Natural killer cell (primary cell): ENCODE measurements at regions of chr19 and their contacts with region 1.

Region 1: GRCh38 chr19:29665215-29665825 is at the start of gene PLEKHF1:
- DNase-seq: peak; percentile 85 to 88
- ATAC-seq: peak; percentile 80 to 93 (median 87)
- H3K4me3 ChIP-seq: peak within 1 kb of the TSS; percentile 88
- H3K4me3 Mint-ChIP-seq: peak within 1 kb of the TSS; percentile 91
- H3K27ac ChIP-seq: peak within 1 kb of the TSS; percentile 61
- H3K27ac Mint-ChIP-seq: peak within 1 kb of the TSS; percentile 94 to 98
- H3K4me1 ChIP-seq: peaks cover 56% of the 10 kb centered on the region
- H3K4me1 Mint-ChIP-seq: peaks cover 46 to 47% of the 10 kb centered on the region in 2 donors
- H3K27me3 ChIP-seq: no peaks in the 10 kb centered on the region
- H3K27me3 Mint-ChIP-seq: no peaks in the 10 kb centered on the region
- CTCF ChIP-seq: no peak
- total RNA-seq, gene PLEKHF1: 53.0 to 81.8 (median 53.8) TPM

Region 2: DNA sequence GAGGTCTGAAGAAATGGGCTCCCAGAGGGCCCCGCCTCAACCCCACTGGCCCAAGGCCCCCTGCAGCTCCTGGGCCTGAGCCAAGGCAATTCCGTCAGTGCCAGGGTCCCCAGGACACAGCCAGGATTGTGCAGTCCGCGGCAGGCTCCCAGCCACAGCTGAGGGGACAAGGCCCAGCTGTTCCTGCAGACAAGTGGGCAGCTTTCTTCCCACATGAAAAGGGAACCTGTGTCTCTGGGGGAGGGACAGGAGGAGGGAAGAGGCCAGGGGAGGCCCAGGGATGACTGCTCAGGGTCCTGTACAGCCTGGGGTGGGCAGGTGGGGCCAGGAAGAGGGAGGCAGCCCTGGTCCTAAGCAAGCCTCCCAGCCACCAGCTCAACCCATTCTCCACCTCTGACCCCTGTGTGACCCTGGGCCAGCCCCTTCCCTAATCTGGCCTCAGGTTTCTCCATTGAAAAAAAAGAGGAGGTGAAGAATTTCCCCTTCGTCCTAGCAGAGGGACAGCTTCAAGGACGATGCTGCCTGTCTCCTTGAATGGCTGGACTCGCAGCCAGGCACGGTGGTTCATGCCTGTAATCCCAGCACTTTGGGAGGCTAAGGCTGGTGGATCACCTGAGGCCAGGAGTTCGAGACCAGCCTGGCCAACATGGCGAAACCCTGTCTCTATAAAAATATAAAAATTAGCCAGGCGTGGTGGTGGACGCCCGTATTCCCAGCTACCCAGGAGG is 160.1 kb before region 1 on chr19:
- intact Hi-C with region 1: no loop called
- DNase-seq: no peak
- ATAC-seq: no peak
- H3K4me3 ChIP-seq: no peak overlapping the region
- H3K4me3 Mint-ChIP-seq: no peak overlapping the region
- H3K27ac ChIP-seq: no peak overlapping the region
- H3K27ac Mint-ChIP-seq: no peak overlapping the region
- H3K4me1 ChIP-seq: no peaks in the 10 kb centered on the region
- H3K4me1 Mint-ChIP-seq: no peaks in the 10 kb centered on the region
- H3K27me3 ChIP-seq: no peaks in the 10 kb centered on the region
- H3K27me3 Mint-ChIP-seq: peaks cover 2 to 25% of the 10 kb centered on the region in 2 donors
- CTCF ChIP-seq: no peak

Region 3: DNA sequence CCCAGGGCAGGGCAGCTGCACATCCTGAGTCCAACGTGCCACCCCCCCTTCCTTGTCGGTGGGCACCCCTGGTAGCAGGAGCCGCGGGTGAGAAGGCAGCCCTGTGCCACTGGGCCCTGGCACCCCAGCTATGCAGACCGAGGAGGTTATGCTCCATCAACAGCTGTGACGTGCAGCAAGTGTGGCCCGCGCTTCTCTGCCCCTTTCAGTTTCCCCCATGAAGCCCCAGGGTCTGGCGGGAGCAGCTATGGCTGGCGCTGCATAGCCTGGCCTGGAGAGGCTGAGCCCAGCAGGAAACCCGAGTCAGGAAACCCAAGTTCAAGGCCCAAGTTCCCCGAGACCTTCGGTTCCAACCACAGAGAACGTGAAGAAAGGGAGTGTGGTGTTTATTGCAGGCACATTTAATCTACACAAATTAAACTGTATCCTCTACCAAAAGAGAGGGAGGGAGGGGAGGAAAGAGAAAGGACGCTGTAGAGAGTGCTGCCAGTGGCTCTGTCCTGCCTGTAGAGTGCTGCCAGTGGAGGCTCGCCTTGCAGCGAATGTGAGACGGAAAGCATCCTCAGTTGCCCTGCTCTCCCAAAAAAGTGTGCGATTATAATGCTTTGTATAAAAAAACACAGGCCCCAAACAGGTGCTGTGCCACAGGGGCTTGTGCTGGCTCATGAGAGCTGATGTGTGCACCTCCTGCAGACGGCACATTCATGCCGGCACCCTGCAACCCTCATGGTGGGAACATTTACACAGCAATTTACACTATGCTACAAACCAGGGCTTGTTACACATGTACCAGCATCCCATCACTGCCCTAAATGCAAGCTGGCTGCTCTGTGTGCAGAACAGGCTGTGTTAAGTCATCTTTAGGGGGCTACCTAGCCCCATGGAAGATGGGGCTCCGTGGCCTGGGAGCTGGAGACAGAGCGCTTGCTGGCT is 42.9 kb before region 1 on chr19:
- intact Hi-C with region 1: loop called (anchors 5 kb)
- DNase-seq: peak; percentile 46 to 65
- ATAC-seq: peak; percentile 74 to 79 (median 78)
- H3K4me3 ChIP-seq: no peak overlapping the region
- H3K4me3 Mint-ChIP-seq: peak overlapping the region; percentile 73
- H3K27ac ChIP-seq: peak overlapping the region; percentile 50
- H3K27ac Mint-ChIP-seq: peak overlapping the region; percentile 65 to 96
- H3K4me1 ChIP-seq: peaks cover 61% of the 10 kb centered on the region
- H3K4me1 Mint-ChIP-seq: peaks cover 49 to 59% of the 10 kb centered on the region in 2 donors
- H3K27me3 ChIP-seq: no peaks in the 10 kb centered on the region
- H3K27me3 Mint-ChIP-seq: no peaks in the 10 kb centered on the region
- CTCF ChIP-seq: no peak

Region 4: DNA sequence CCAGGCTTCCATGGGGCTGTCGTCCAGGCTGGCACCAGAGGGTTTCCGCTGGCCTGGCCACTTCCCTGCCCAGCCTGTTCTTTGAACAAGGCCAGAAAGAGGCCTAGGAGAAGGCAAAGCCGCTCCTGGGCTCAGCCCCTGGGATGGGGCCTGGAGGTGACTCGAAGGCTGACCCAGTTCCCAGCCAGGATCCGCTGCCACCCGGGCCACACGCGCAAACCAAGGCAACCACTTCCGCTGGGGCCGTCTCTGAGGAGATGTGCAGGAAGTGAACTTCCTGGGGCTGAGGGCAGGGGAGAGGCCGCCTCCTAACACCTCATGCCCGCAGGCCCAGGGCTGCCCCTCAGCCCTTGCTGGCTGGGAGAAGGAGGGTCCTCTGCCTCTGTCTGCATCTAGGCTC is 15.1 kb after region 1 on chr19:
- intact Hi-C with region 1: loop called (anchors 2 kb)
- DNase-seq: peak; percentile 85 to 92
- ATAC-seq: peak; percentile 75 to 91 (median 86)
- H3K4me3 ChIP-seq: no peak overlapping the region
- H3K4me3 Mint-ChIP-seq: peak overlapping the region; percentile 87
- H3K27ac ChIP-seq: peak overlapping the region; percentile 46
- H3K27ac Mint-ChIP-seq: peak overlapping the region; percentile 86 to 98
- H3K4me1 ChIP-seq: peaks cover 78% of the 10 kb centered on the region
- H3K4me1 Mint-ChIP-seq: peaks cover 61 to 82% of the 10 kb centered on the region in 2 donors
- H3K27me3 ChIP-seq: no peaks in the 10 kb centered on the region
- H3K27me3 Mint-ChIP-seq: no peaks in the 10 kb centered on the region
- CTCF ChIP-seq: no peak

Region 5: DNA sequence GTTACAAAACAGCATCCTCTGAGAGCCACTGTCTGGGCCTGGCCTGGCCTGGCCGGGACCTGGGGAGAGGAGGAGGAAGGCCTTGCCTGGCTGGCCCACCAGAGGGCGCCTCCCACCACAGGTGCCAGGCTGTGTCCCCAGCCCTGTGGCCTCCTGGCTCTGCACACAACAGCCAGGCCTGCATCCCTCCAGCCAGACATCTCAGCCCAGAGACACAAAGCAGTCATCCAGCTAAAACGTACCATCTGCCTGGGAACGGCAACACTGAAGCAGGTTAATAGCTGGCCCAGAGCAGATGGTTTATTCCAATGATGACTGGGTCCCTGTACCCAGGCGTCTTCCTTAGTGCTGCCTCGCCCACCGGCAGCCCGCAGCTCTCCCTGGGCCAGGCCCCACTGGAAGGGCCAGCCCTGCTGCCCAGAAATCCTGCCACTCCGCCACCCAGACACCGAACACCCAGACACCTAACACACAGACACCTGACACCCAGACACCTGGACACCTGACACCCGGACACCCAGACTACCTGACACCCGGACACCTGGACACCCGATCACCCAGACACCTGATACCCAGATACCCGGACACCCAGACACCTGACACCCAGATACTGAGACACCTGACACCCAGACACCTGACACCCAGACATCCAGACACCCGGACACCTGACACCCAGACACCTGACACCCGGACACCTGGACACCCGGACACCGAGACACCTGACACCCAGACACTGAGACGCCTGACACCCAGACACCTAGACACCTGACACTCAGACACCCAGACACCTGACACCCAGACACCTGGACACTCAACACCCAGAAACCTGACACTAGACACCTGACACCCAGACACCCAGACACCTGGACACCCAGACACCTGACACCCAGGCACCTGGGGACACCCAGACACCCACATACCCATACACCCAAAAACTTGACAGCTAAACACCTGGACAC is 29.6 kb after region 1 on chr19:
- intact Hi-C with region 1: loop called (anchors 1 kb)
- DNase-seq: peak; percentile 79 to 91
- ATAC-seq: peak; percentile 95 to 96 (median 95)
- H3K4me3 ChIP-seq: no peak overlapping the region
- H3K4me3 Mint-ChIP-seq: no peak overlapping the region
- H3K27ac ChIP-seq: no peak overlapping the region
- H3K27ac Mint-ChIP-seq: peak overlapping the region; percentile 76 to 87
- H3K4me1 ChIP-seq: peaks cover 23% of the 10 kb centered on the region
- H3K4me1 Mint-ChIP-seq: peaks cover 28 to 38% of the 10 kb centered on the region in 2 donors
- H3K27me3 ChIP-seq: no peaks in the 10 kb centered on the region
- H3K27me3 Mint-ChIP-seq: no peaks in the 10 kb centered on the region
- CTCF ChIP-seq: peak; percentile 86

Region 6: DNA sequence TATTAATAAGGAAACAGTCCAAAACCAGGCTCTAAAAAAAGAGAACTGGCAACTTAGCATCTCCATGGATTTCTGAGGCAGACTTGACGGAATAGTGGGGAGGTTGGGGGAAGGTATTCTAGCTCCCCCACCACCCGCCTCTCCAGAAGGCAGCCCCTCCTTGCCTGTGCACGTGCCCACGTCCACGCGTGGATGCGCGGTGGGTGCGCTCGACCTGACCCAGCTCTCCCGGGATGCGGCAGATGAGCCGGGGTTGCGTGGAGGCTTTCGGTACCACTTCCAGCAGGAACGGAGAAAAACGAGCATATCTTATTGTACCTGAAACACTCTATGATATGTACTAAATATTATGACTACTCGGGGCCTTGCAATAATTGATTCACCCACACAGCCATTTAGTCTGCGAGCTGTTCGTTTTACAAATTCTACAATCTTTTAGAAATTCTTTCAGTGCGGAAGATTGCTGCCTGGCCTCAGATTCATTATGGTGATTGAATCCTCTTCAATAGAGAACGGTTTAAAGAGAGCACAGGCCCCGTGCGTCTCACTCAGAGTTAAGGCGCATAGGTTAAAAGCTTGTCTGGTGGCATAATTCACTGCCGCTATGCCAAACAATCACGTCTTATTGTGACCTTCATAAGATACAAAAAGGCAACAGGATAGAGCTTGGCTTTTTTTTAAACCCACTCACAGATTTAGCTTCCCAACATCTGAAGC is 394.6 kb after region 1 on chr19:
- intact Hi-C with region 1: no loop called
- DNase-seq: no peak
- ATAC-seq: no peak
- H3K4me3 ChIP-seq: no peak overlapping the region
- H3K4me3 Mint-ChIP-seq: no peak overlapping the region
- H3K27ac ChIP-seq: no peak overlapping the region
- H3K27ac Mint-ChIP-seq: no peak overlapping the region
- H3K4me1 ChIP-seq: no peaks in the 10 kb centered on the region
- H3K4me1 Mint-ChIP-seq: no peaks in the 10 kb centered on the region
- H3K27me3 ChIP-seq: no peaks in the 10 kb centered on the region
- H3K27me3 Mint-ChIP-seq: peaks cover 0 to 4% of the 10 kb centered on the region in 2 donors
- CTCF ChIP-seq: no peak